ENCODE measurements at regions of chr7 and their contacts with region 1.

Region 1: GRCh38 chr7:97027427-97028234 is 3.0 kb upstream of the DLX5 start:
- DNase-seq: peak; percentile 67 to 88 (median 80)
- ATAC-seq: peak; percentile 95
- H3K4me3 ChIP-seq: peak overlapping the region in 1 of 2 donors; percentile 26
- H3K27ac ChIP-seq: no peak overlapping the region
- H3K4me1 ChIP-seq: peaks cover 11 to 23% of the 10 kb centered on the region in 2 donors
- H3K27me3 ChIP-seq: peaks cover 47 to 87% of the 10 kb centered on the region in 2 donors
- CTCF ChIP-seq: peak; percentile 73 to 82

Region 2: GRCh38 chr7:95916573-95917297 is 1110.9 kb before region 1 on chr7:
- intact Hi-C with region 1: loop called in 1 of 2 experiments (anchors 10 kb)
- DNase-seq: peak; percentile 57 to 89 (median 82)
- ATAC-seq: peak; percentile 86
- H3K4me3 ChIP-seq: peak overlapping the region in 1 of 2 donors; percentile 12
- H3K27ac ChIP-seq: no peak overlapping the region
- H3K4me1 ChIP-seq: no peaks in the 10 kb centered on the region
- H3K27me3 ChIP-seq: peaks cover 0 to 5% of the 10 kb centered on the region in 2 donors
- CTCF ChIP-seq: peak; percentile 85 to 89

Region 3: DNA sequence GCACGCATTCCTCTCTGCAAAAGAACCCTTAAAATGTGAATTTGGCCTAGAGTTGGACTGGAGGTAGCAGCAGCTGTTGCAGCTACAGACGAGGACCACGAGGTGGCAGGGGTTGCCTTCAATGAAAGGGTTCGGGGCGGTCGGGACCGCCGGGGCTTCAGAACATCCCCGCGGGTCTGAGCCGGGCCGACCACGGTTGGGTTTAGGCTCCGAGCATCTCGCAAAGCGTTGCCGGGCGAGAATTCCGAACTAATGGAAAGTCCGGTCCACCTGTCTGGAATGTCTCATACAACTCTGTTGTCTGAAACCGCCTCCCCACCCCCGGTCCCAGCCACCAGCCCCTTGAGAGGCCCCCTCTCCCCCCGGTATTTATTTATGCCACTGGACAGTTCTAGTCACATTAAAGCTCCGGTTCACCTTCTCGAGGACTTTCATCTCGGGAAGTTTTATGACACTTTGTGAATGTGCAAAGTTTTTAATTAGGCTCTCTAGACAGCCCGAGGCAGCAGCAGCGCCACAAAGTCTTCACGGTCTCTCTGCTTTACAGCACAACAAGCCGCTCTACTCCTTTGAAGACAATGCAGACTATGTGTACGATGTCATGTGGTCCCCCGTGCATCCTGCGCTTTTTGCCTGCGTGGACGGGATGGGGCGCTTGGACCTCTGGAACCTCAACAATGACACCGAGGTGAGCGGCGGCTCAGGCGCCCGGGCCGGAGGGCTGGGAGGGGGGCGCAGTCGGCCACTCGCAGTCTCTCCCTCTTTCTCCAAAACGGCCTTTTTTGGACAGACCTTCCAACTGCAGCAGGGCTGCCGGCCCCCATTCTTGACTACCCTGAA is 951.9 kb before region 1 on chr7:
- intact Hi-C with region 1: loop called in 1 of 2 experiments (anchors 5 kb)
- DNase-seq: peak; percentile 50 to 86 (median 71)
- ATAC-seq: peak; percentile 98
- H3K4me3 ChIP-seq: peak overlapping the region; percentile 26 to 28
- H3K27ac ChIP-seq: no peak overlapping the region
- H3K4me1 ChIP-seq: peaks cover 0 to 8% of the 10 kb centered on the region in 2 donors
- H3K27me3 ChIP-seq: peaks cover 22 to 42% of the 10 kb centered on the region in 2 donors
- CTCF ChIP-seq: peak; percentile 65 to 76

Region 4: GRCh38 chr7:96414931-96415292 is 612.7 kb before region 1 on chr7:
- intact Hi-C with region 1: loop called in 1 of 2 experiments (anchors 5 kb)
- DNase-seq: peak in 2 of 4 donors; percentile 14 to 60
- ATAC-seq: peak; percentile 88
- H3K4me3 ChIP-seq: no peak overlapping the region
- H3K27ac ChIP-seq: no peak overlapping the region
- H3K4me1 ChIP-seq: no peaks in the 10 kb centered on the region
- H3K27me3 ChIP-seq: no peaks in the 10 kb centered on the region
- CTCF ChIP-seq: peak; percentile 52 to 55

Region 5: DNA sequence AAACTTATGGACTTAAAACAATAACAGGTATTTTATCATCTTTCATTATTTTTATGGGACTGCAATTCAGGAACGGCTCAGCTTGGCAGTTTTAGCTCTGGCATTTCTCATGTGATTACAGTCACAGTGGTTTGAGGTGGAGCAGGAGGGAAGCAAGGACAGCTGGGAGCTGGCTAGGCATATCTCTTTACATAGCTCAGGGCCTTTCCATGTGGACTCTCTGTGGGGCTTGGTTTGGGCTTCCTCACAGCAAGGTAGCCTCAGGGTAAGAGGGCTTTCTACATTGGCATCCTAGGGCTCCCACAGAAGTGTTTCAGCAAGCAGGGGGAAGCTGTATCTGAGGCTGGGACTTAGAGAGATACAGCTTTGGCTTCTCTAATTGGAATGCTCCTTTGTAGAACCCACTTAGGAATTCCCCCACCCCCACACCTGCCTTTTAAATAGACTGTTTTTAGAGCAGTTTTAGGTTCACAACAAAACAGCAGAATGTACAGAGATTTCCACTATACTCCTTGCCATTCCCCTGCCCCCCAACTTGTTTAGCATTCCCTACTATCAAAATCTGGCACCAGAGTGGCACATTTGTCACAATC is 63.2 kb after region 1 on chr7:
- intact Hi-C with region 1: no loop called
- DNase-seq: no peak
- ATAC-seq: no peak
- H3K4me3 ChIP-seq: no peak overlapping the region
- H3K27ac ChIP-seq: no peak overlapping the region
- H3K4me1 ChIP-seq: no peaks in the 10 kb centered on the region
- H3K27me3 ChIP-seq: peaks cover 0 to 10% of the 10 kb centered on the region in 2 donors
- CTCF ChIP-seq: no peak

Measured in left lung (tissue), 14 donors.